Spleen (tissue), 13 donors: ENCODE measurements at regions of chr14 and their contacts with region 1.

Region 1: DNA sequence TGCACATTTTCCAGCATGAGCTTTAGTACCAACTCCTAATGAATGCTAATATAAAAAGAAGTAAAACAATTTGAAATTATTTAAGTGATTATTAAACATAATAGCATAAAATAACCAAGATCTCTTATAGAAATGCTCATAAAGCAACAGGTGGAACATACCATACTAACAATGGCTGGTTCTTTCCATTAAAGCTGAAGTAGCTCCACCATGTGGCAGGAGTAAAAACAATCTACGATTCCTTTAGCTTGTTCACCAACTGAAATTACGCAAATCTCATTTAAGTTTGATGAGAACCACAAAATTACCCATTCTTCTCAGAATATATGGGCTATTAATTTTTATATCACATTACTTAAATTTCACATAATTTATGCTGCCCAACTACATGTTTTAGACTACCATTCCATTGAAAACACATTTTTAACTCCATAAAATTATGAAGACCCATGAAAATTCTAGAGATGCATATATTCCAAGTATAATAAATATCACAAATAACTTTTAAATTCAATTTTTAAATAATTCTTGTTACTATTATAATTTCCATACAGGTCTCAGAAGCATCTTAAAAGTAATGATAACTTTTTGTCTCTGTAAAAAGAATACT is 213.6 kb downstream of the DAD1 start:
- DNase-seq: no peak
- H3K4me3 ChIP-seq: no peak overlapping the region
- H3K27ac ChIP-seq: no peak overlapping the region
- H3K4me1 ChIP-seq: no peaks in the 10 kb centered on the region
- H3K27me3 ChIP-seq: no peaks in the 10 kb centered on the region
- CTCF ChIP-seq: peak in 7 of 11 experiments; percentile 30 to 54 (median 42)
- POLR2A ChIP-seq: no peak

Region 2: DNA sequence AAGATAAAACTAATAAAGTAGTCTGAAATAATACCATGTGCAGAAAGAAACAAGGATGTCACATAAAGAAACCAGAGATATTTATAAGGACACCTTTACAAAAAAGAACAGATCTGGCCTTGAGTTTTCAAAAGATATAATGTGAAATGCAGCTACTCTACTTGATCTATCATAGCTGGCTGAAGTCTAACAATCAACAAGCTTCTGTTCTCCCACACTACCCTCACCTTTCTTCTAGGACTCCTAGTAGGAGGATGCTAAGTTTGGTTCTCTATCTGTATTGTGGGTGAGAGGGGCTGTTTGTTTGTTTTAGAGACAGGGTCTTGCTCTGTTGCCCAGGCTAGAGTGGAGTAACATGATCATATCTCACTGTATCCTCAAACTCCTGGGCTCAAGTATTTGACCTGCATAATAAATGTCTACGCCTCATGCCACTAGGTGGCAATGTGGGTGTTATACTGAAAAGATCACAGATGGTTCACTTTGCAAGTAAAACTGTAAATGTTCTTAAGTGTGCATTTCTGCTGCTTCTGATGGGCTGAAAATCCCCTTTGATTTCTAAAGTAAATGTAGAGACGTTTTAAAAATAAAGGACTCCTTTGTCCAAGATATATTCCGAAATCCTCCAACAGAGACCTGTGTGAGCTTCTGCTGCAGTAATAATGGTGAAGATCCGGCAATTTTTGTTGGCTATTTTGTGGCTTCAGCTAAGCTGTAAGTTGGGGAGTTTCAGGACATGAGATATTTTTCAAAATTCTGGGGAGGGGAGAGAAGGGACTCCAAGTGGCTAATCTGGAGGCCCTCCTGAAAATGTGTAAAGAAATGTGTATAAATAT is 55.7 kb before region 1 on chr14:
- intact Hi-C with region 1: loop called (anchors 10 kb)
- DNase-seq: no peak
- H3K4me3 ChIP-seq: no peak overlapping the region
- H3K27ac ChIP-seq: no peak overlapping the region
- H3K4me1 ChIP-seq: no peaks in the 10 kb centered on the region
- H3K27me3 ChIP-seq: no peaks in the 10 kb centered on the region
- CTCF ChIP-seq: peak in 8 of 11 experiments; percentile 10 to 55 (median 52)
- POLR2A ChIP-seq: no peak

Region 3: GRCh38 chr14:22418631-22419030 is 43.2 kb after region 1 on chr14:
- intact Hi-C with region 1: no loop called
- DNase-seq: no peak
- H3K4me3 ChIP-seq: no peak overlapping the region
- H3K27ac ChIP-seq: peak overlapping the region in 3 of 8 donors; percentile 15 to 38 (median 17)
- H3K4me1 ChIP-seq: peaks cover 6 to 43% (median 18%) of the 10 kb centered on the region in 6 donors
- H3K27me3 ChIP-seq: no peaks in the 10 kb centered on the region
- CTCF ChIP-seq: no peak
- POLR2A ChIP-seq: no peak